B cell (primary cell): ENCODE measurements at regions of chr16 and their contacts with region 1.

Region 1: GRCh38 chr16:11094072-11094856 is 149.9 kb downstream of the CLEC16A start:
- DNase-seq: peak; percentile 54
- ATAC-seq: peak; percentile 62
- H3K4me3 ChIP-seq: no peak overlapping the region
- H3K4me3 Mint-ChIP-seq: peak overlapping the region; percentile 67
- H3K27ac ChIP-seq: peak overlapping the region; percentile 48 to 54
- H3K27ac Mint-ChIP-seq: peak overlapping the region; percentile 92
- H3K4me1 ChIP-seq: peaks cover 27 to 33% of the 10 kb centered on the region in 2 donors
- H3K4me1 Mint-ChIP-seq: peaks cover 38% of the 10 kb centered on the region
- H3K27me3 ChIP-seq: no peaks in the 10 kb centered on the region
- H3K27me3 Mint-ChIP-seq: no peaks in the 10 kb centered on the region
- CTCF ChIP-seq: no peak

Region 2: DNA sequence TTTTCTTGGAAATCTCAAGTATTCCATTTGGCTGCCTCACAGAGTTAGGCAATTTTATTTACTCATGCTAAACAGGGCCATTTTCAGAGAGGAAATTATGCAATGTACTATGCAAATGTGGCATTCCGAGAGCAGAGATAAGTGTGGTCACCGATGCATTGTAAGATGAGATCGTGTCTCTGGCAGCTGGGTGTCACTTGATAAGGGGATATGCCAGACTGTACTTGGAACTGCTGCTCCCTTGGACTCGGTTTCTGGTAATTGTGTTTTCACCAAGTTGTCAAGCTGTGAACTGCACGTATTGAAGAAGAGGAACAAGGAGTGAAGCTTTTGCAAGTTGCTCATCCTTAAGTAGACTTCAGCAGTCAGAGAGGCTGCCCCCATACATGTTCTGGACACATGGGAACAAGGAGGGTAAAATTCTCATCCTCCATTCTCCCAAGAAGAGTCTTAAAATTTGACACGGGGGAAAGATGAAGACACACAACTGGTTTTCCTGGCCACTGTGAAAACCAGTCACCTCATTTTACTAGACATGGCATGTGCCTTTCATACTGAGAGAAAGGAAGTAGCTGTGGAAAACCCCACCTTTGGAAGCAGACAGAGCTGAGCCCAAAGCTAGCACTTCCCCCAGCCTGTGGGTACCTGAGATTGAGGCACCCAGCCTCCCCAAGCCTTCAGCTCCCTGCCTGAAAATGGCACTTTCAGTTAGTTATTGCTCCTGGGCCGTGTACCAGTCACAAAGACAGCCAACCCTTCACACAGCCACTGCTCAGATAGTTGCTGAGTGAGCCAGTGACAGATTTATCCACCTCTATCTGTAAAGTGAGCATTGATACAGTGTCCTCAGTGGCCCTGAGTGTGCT is 11.0 kb after region 1 on chr16:
- CTCF ChIA-PET with region 1: interaction called, 9 read pairs
- POLR2A ChIA-PET with region 1: interaction called, 4 read pairs
- intact Hi-C with region 1: loop called (anchors 1 kb)
- DNase-seq: peak; percentile 70
- ATAC-seq: peak; percentile 92
- H3K4me3 ChIP-seq: peak overlapping the region in 2 of 5 experiments; percentile 8
- H3K4me3 Mint-ChIP-seq: peak overlapping the region; percentile 78
- H3K27ac ChIP-seq: peak overlapping the region in 1 of 2 donors; percentile 68
- H3K27ac Mint-ChIP-seq: peak overlapping the region; percentile 83
- H3K4me1 ChIP-seq: peaks cover 18 to 23% of the 10 kb centered on the region in 2 donors
- H3K4me1 Mint-ChIP-seq: peaks cover 34% of the 10 kb centered on the region
- H3K27me3 ChIP-seq: no peaks in the 10 kb centered on the region
- H3K27me3 Mint-ChIP-seq: no peaks in the 10 kb centered on the region
- CTCF ChIP-seq: no peak